Activated CD4-positive, alpha-beta T cell treated with anti-CD3 and anti-CD28 coated beads for 36 hours (primary cell): ENCODE measurements at regions of chr10 and their contacts with region 1.

Region 1: DNA sequence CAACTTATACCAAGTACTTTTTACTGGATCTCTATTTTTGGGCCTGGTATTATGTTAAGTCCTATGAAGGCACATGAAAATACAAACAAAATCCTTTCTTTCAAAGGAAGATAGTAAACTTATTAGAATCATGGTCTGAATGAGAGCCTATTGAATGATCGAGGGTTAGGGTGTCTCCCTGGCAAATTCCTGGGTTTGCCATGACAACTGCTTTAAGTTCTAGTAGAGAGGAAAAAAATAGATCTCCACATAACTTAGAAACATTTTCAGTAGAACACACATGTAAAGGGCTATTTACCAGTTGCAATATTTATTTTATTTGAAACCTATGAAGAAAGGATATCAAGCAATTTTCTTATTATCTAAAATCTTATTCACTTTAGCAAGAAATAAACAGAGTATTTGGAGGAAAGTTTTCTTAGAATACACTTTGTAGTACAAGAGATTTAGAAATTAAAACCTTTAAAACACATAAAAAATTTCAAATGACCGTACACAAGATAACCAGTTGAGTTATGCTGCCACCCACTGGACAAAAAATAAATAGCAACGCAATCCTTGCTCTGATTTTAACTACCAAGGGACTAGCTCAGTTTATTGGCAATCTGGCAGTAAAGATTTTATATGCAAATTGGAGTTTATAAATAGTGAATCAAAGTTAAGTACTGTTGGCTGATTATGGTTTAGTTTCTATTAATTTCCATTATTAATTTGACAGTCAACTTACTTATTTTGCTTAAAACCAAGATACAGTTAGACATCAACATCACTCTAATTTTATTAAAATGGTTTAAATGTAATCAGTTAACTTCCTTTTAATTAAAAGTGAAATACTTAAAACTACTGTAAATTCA is 33.9 kb downstream of the CACUL1 start:
- DNase-seq: peak; percentile 69
- ATAC-seq: peak; percentile 71
- H3K4me3 Mint-ChIP-seq: no peak overlapping the region
- H3K27ac Mint-ChIP-seq: no peak overlapping the region
- H3K4me1 Mint-ChIP-seq: peaks cover 6% of the 10 kb centered on the region
- H3K27me3 Mint-ChIP-seq: no peaks in the 10 kb centered on the region

Region 2: GRCh38 chr10:118259288-118259906 is 461.5 kb before region 1 on chr10:
- CTCF ChIA-PET with region 1: no interaction called
- POLR2A ChIA-PET with region 1: no interaction called
- intact Hi-C with region 1: no loop called
- DNase-seq: peak; percentile 73
- ATAC-seq: peak; percentile 53
- H3K4me3 Mint-ChIP-seq: no peak overlapping the region
- H3K27ac Mint-ChIP-seq: no peak overlapping the region
- H3K4me1 Mint-ChIP-seq: no peaks in the 10 kb centered on the region
- H3K27me3 Mint-ChIP-seq: peaks cover 36% of the 10 kb centered on the region

Region 3: GRCh38 chr10:118698421-118698820 is 22.5 kb before region 1 on chr10:
- CTCF ChIA-PET with region 1: interaction called, 19 read pairs
- POLR2A ChIA-PET with region 1: no interaction called
- intact Hi-C with region 1: loop called in 1 of 2 experiments (anchors 2 kb)
- DNase-seq: peak; percentile 89
- ATAC-seq: peak; percentile 100
- H3K4me3 Mint-ChIP-seq: peak overlapping the region; percentile 16
- H3K27ac Mint-ChIP-seq: peak overlapping the region; percentile 18
- H3K4me1 Mint-ChIP-seq: peaks cover 58% of the 10 kb centered on the region
- H3K27me3 Mint-ChIP-seq: peaks cover 2% of the 10 kb centered on the region

Region 4: GRCh38 chr10:118850418-118851061 is 129.6 kb after region 1 on chr10:
- CTCF ChIA-PET with region 1: interaction called, 4 read pairs
- POLR2A ChIA-PET with region 1: no interaction called
- intact Hi-C with region 1: loop called in 1 of 2 experiments (anchors 5 kb)
- DNase-seq: peak; percentile 93
- ATAC-seq: peak; percentile 90
- H3K4me3 Mint-ChIP-seq: no peak overlapping the region
- H3K27ac Mint-ChIP-seq: no peak overlapping the region
- H3K4me1 Mint-ChIP-seq: no peaks in the 10 kb centered on the region
- H3K27me3 Mint-ChIP-seq: peaks cover 2% of the 10 kb centered on the region